Uterus (tissue), 4 donors: ENCODE measurements at regions of chr13 and their contacts with region 1.

Region 1: GRCh38 chr13:95191821-95192563 is 109.3 kb downstream of the ABCC4 start:
- DNase-seq: peak; percentile 28 to 63
- H3K4me3 ChIP-seq: no peak overlapping the region
- H3K27ac ChIP-seq: no peak overlapping the region
- H3K4me1 ChIP-seq: no peaks in the 10 kb centered on the region
- H3K27me3 ChIP-seq: no peaks in the 10 kb centered on the region
- CTCF ChIP-seq: peak; percentile 47 to 67 (median 53)
- POLR2A ChIP-seq: no peak

Region 2: GRCh38 chr13:94168783-94169453 is 1023.1 kb before region 1 on chr13:
- intact Hi-C with region 1: no loop called
- DNase-seq: no peak
- H3K4me3 ChIP-seq: no peak overlapping the region
- H3K27ac ChIP-seq: no peak overlapping the region
- H3K4me1 ChIP-seq: no peaks in the 10 kb centered on the region
- H3K27me3 ChIP-seq: no peaks in the 10 kb centered on the region
- CTCF ChIP-seq: no peak
- POLR2A ChIP-seq: no peak

Region 3: GRCh38 chr13:95137096-95137495 is 54.9 kb before region 1 on chr13:
- intact Hi-C with region 1: no loop called
- DNase-seq: no peak
- H3K4me3 ChIP-seq: no peak overlapping the region
- H3K27ac ChIP-seq: no peak overlapping the region
- H3K4me1 ChIP-seq: no peaks in the 10 kb centered on the region
- H3K27me3 ChIP-seq: no peaks in the 10 kb centered on the region
- CTCF ChIP-seq: no peak
- POLR2A ChIP-seq: no peak

Region 4: GRCh38 chr13:95256086-95256485 is 64.1 kb after region 1 on chr13:
- intact Hi-C with region 1: no loop called
- DNase-seq: no peak
- H3K4me3 ChIP-seq: no peak overlapping the region
- H3K27ac ChIP-seq: no peak overlapping the region
- H3K4me1 ChIP-seq: no peaks in the 10 kb centered on the region
- H3K27me3 ChIP-seq: no peaks in the 10 kb centered on the region
- CTCF ChIP-seq: no peak
- POLR2A ChIP-seq: no peak

Region 5: DNA sequence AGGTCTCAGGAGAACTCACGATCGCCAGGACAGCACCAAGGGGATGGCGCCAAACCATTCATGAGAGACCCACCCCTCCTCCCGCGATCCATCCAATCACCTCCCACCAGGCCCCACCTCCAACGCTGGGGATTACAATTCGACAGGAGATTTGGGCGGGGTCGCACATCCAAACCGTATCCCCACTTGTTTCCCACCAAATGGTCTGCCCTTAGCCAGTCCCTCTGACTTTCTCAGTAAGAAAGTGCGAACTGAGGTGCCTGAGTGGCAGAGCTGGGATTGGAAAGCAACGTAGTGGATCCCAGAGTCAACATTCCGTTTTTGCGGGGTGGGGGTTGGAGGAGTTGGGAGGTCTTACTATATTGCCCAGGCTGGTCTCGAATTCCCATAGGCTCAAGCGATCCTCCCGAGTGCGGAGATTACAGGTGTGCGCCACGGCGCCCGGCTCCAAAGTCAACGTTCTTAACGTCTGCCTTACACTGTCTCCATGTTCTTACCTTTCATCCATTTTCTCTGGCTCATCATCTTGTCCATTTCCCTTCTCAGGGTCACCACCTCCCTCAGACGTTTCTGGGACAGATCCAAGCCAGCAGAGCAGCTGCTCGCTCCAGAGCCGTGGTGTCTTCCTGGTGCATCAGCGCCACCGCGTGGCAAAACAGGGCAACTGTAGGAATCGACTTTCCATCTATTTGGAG is 212.0 kb after region 1 on chr13:
- intact Hi-C with region 1: loop called (anchors 5 kb)
- DNase-seq: peak; percentile 67 to 81
- H3K4me3 ChIP-seq: peak overlapping the region in 1 of 2 donors; percentile 5
- H3K27ac ChIP-seq: no peak overlapping the region
- H3K4me1 ChIP-seq: no peaks in the 10 kb centered on the region
- H3K27me3 ChIP-seq: no peaks in the 10 kb centered on the region
- CTCF ChIP-seq: peak; percentile 85 to 93 (median 91)
- POLR2A ChIP-seq: no peak